HEK293 (cell line): ENCODE measurements at regions of chr19 and their contacts with region 1.

Region 1: DNA sequence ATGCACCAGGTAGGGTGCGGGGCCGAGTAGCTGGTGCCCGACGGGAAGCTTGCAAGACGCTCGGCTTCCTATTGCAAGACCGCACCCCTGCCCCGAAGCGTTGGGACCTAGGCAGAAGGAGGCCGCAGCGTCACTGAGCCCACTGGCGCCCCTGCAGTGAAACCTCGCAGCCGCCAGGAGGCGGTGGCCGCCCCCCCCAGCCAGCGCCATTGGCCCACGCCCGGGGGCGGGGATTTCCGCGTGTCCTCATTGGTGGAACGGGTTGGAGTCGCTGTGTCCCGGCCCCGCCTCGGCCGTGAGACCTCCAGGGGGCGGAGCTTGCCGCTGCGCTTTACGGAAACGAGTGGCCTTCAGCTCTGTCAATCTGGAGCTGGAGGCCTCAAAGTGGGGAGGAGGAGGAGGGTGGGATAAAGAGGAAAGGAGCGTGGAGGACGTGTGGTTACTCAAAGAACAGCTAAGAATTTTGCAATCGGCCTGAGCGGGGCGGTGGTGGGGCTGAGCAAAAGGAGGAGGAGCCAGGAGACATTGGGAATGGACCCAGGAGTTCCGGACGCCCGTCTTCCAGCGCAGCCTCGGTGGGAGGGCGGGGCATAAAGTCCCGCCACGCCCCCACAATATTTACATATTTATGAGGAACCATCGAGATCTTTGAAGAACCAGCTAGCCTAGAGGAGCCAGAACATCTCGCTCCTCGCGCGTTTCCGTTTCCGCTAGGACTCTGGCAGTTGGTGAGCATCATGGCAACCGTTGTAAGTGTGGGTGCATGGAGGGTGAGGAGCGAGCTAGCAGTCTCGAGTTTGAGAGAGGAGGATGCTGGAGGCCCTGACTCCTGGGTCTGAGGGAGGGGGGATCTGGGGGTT is at the starts of genes GYS1 and RUVBL2:
- H3K4me3 ChIP-seq: peak within 1 kb of the TSS; percentile 81
- H3K27ac ChIP-seq: peak within 1 kb of the TSS; percentile 81
- H3K4me1 ChIP-seq: peaks cover 12% of the 10 kb centered on the region; the same call in 1 of the 2 replicates
- CTCF ChIP-seq: peak; percentile 100

Region 2: GRCh38 chr19:48872182-48872883 is 121.1 kb before region 1 on chr19 and contains the start of gene PPP1R15A:
- CTCF ChIA-PET with region 1: interaction called, 6 read pairs
- POLR2A ChIA-PET with region 1: interaction called, 33 read pairs
- H3K4me3 ChIP-seq: peak within 1 kb of the TSS; percentile 80
- H3K27ac ChIP-seq: peak within 1 kb of the TSS; percentile 93
- H3K4me1 ChIP-seq: peaks cover 32% of the 10 kb centered on the region
- CTCF ChIP-seq: 0 out of 2 replicates have a peak, but pooled peaks have one; percentile 32

Region 3: GRCh38 chr19:48970923-48971395 is 22.4 kb before region 1 on chr19:
- CTCF ChIA-PET with region 1: interaction called, 79 read pairs
- POLR2A ChIA-PET with region 1: interaction called, 16 read pairs
- H3K4me3 ChIP-seq: no peak overlapping the region
- H3K27ac ChIP-seq: no peak overlapping the region
- H3K4me1 ChIP-seq: 0 out of 2 replicates have a peak, but pooled peaks cover 4% of the 10 kb centered on the region
- CTCF ChIP-seq: peak; percentile 91

Region 4: DNA sequence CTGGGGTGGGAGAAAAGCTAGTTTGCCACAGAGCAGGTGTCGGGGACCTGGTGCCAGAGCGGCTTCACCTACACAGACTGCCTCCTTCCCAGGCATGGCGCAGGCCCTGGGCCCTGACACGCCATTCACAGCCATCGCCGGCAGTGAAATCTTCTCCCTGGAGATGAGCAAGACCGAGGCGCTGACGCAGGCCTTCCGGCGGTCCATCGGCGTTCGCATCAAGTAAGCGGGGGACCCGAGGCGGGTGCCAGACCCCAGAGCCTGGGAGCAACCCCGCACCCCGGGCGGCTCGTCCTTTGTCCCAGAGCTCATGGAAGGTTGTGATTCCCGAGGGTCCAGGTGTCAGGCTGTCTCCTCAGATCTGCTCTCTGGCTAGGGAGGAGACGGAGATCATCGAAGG is 13.5 kb after region 1 on chr19:
- CTCF ChIA-PET with region 1: interaction called, 133 read pairs
- POLR2A ChIA-PET with region 1: interaction called, 19 read pairs
- H3K4me3 ChIP-seq: no peak overlapping the region
- H3K27ac ChIP-seq: no peak overlapping the region
- H3K4me1 ChIP-seq: no peaks in the 10 kb centered on the region
- CTCF ChIP-seq: no peak

Region 5: DNA sequence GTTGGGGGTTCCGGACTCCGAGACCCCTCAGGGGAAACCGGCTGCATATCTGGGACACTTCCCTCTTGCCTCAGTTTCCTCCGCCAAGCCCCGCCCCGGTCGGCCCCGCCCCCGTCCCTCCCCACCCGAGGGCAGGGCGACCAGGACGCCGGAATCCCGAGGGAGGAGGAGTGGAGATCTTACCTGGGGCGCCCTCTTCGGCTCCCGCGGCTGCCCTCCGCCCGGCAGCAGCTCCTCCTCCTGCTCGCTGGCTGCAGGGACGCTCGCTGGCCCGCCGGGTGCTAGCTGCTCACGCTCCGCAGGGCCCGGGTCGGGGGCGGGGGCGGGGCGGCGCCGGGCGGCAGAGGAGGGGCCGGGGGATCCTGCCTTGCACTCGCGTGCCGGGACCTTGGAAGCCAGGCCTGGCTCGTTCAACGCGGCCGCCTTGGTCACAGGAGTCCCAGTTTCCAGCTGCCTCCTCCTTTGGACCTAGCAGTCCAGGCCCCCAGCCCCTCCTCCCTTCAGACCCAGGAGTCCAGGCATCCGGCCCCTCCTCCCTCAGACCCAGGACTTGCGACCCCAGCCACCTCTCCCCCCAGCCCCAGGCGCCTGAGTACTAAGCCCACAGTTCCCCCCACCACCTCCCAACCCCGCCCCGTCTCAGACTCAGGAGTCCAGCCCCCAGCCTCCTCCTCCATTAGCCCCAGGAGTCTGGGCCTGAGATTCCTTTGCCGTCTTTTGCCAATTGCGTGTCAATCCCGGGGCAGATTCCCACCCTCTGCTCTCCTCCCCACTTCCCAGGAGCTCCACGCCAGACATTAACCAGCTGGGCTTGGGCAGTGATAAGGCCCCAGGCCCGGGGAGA is 71.6 kb after region 1 on chr19 and contains the start of gene NTF4:
- CTCF ChIA-PET with region 1: interaction called, 25 read pairs
- POLR2A ChIA-PET with region 1: interaction called, 12 read pairs
- H3K4me3 ChIP-seq: peak within 1 kb of the TSS; percentile 29
- H3K27ac ChIP-seq: no peak within 1 kb of the TSS
- H3K4me1 ChIP-seq: peaks cover 6% of the 10 kb centered on the region
- CTCF ChIP-seq: no peak